Caco-2 (cell line): ENCODE measurements at regions of chr12 and their contacts with region 1.

Region 1: DNA sequence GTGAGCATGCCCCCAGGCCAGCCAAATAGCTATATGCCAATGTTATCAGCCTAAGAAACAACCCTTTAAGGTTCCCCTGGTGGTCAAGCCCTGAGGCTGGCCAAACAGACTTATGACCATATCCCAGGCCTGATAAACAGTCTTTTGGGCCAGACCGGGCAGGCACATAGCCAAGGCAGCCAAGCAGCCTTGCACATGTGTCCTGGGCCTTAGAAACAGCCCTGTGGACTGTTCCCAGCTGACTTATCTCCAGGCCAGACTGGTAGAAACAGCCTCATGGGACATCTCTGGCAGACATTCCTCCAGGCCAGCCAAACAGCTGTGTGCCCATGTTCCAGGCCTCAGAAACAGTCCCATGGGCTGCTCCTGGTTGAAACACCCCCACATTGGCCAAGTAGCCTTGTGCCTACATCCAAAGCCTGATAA is 295.0 kb upstream of the MGAT4C start:
- DNase-seq: no peak
- H3K4me3 ChIP-seq: no peak overlapping the region
- H3K4me3 Mint-ChIP-seq: no peak overlapping the region
- H3K27ac Mint-ChIP-seq: no peak overlapping the region
- H3K4me1 ChIP-seq: no peaks in the 10 kb centered on the region
- H3K4me1 Mint-ChIP-seq: no peaks in the 10 kb centered on the region
- H3K27me3 ChIP-seq: no peaks in the 10 kb centered on the region
- H3K27me3 Mint-ChIP-seq: no peaks in the 10 kb centered on the region
- CTCF ChIP-seq: no peak

Region 2: DNA sequence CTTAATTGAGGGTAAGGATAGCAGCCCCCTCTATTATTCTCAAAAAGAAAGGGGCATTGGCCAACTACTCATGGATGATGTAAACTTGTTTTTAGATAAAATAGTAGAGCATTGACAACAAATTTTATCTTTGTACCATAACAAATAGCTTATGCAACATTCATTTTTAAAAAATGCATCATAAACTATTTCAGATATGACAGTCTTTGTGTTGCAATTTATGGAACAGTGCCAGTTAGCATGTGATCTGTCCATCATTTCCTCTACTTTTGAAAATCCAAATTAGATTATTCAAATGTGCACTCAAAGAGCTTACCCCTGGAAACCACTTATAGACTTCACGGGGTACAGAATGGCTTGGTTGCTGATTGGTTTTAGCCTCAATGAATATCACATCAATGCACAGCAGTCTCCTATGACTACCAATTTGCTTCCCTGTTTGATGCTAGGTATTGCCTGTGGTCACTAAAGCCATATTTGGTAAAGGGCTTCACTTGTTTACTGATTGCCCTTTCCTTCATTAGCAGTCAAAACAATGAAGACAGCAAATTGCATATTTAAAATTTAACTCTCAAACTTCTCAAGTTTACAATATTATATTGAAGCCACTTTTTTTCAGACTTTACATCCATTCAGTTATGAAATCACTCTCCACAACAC is 20.0 kb before region 1 on chr12:
- CTCF ChIA-PET with region 1: no interaction called
- POLR2A ChIA-PET with region 1: no interaction called
- intact Hi-C with region 1: no loop called
- DNase-seq: no peak
- H3K4me3 ChIP-seq: no peak overlapping the region
- H3K4me3 Mint-ChIP-seq: no peak overlapping the region
- H3K27ac Mint-ChIP-seq: no peak overlapping the region
- H3K4me1 ChIP-seq: no peaks in the 10 kb centered on the region
- H3K4me1 Mint-ChIP-seq: no peaks in the 10 kb centered on the region
- H3K27me3 ChIP-seq: no peaks in the 10 kb centered on the region
- H3K27me3 Mint-ChIP-seq: no peaks in the 10 kb centered on the region
- CTCF ChIP-seq: no peak

Region 3: DNA sequence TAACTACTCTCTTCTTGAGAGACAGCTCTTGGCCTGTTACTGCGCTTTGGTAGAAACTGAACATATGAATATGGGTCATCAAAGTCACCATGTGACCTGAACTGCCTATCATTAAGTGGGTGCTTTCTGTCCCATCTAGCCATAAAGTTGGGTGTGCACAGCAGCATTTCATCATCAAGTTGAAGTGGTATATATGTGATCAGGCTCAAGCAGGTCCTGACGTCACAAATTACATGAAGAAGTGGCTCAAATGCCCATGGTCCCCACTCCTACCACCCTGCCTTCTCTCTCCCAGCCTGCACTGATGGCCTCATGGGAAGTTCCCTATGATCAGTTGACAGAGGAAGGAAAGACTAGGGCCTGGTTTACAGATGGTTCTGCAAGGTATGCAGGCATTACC is 13.9 kb after region 1 on chr12:
- CTCF ChIA-PET with region 1: no interaction called
- POLR2A ChIA-PET with region 1: no interaction called
- intact Hi-C with region 1: loop called (anchors 1 kb)
- DNase-seq: no peak
- H3K4me3 ChIP-seq: no peak overlapping the region
- H3K4me3 Mint-ChIP-seq: no peak overlapping the region
- H3K27ac Mint-ChIP-seq: no peak overlapping the region
- H3K4me1 ChIP-seq: no peaks in the 10 kb centered on the region
- H3K4me1 Mint-ChIP-seq: no peaks in the 10 kb centered on the region
- H3K27me3 ChIP-seq: no peaks in the 10 kb centered on the region
- H3K27me3 Mint-ChIP-seq: no peaks in the 10 kb centered on the region
- CTCF ChIP-seq: no peak